ENCODE measurements at regions of chr10 and their contacts with region 1.

Region 1: GRCh38 chr10:11631890-11632587 is 20.6 kb upstream of the USP6NL start:
- DNase-seq: peak; percentile 58
- H3K4me3 Mint-ChIP-seq: no peak overlapping the region
- H3K27ac Mint-ChIP-seq: no peak overlapping the region
- H3K4me1 Mint-ChIP-seq: peaks cover 12% of the 10 kb centered on the region
- H3K27me3 Mint-ChIP-seq: peaks cover 12% of the 10 kb centered on the region

Region 2: DNA sequence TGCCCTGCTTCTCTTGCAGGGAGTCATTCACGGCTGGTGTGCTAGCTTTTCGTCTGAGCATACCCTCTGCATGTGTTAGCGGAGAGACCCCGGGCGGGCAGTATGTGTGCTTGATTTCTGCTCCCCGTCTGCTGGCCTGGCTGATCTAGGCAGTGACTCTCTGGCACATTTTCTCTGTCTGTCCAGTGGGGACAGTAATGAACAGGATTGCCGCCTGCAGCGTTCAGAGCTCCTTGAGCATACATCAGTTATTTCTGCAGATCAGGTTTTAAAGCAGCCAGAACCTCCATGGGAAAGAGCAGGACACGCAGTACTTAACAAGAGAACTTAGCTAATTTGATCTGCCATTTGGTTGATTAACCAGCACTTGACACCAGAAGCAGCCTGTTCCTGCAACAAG is 371.9 kb before region 1 on chr10:
- CTCF ChIA-PET with region 1: no interaction called
- POLR2A ChIA-PET with region 1: no interaction called
- intact Hi-C with region 1: no loop called
- DNase-seq: no peak
- H3K4me3 Mint-ChIP-seq: no peak overlapping the region
- H3K27ac Mint-ChIP-seq: peak overlapping the region; percentile 1
- H3K4me1 Mint-ChIP-seq: peaks cover 92% of the 10 kb centered on the region
- H3K27me3 Mint-ChIP-seq: no peaks in the 10 kb centered on the region

Region 3: GRCh38 chr10:11602919-11603523 is 29.0 kb before region 1 on chr10:
- CTCF ChIA-PET with region 1: no interaction called
- POLR2A ChIA-PET with region 1: no interaction called
- intact Hi-C with region 1: loop called (anchors 2 kb)
- DNase-seq: no peak
- H3K4me3 Mint-ChIP-seq: no peak overlapping the region
- H3K27ac Mint-ChIP-seq: no peak overlapping the region
- H3K4me1 Mint-ChIP-seq: peaks cover 42% of the 10 kb centered on the region
- H3K27me3 Mint-ChIP-seq: no peaks in the 10 kb centered on the region

Measured in activated CD4-positive, alpha-beta memory T cell treated with anti-CD3 and anti-CD28 coated beads for 36 hours (primary cell).